AG04450 (cell line): ENCODE measurements at regions of chr5 and their contacts with region 1.

Region 1: GRCh38 chr5:131109540-131110255 is 55.4 kb downstream of the HINT1 start:
- DNase-seq: no peak
- H3K4me3 ChIP-seq: no peak overlapping the region
- H3K27ac ChIP-seq: no peak overlapping the region
- H3K27me3 ChIP-seq: no peaks in the 10 kb centered on the region
- CTCF ChIP-seq: peak; percentile 68

Region 2: GRCh38 chr5:130871346-130872086 is 238.2 kb before region 1 on chr5:
- CTCF ChIA-PET with region 1: interaction called, 29 read pairs
- POLR2A ChIA-PET with region 1: no interaction called
- DNase-seq: no peak
- H3K4me3 ChIP-seq: no peak overlapping the region
- H3K27ac ChIP-seq: no peak overlapping the region
- H3K27me3 ChIP-seq: no peaks in the 10 kb centered on the region
- CTCF ChIP-seq: peak; percentile 63